PC-9 (cell line): ENCODE measurements at regions of chr4 and their contacts with region 1.

Region 1: DNA sequence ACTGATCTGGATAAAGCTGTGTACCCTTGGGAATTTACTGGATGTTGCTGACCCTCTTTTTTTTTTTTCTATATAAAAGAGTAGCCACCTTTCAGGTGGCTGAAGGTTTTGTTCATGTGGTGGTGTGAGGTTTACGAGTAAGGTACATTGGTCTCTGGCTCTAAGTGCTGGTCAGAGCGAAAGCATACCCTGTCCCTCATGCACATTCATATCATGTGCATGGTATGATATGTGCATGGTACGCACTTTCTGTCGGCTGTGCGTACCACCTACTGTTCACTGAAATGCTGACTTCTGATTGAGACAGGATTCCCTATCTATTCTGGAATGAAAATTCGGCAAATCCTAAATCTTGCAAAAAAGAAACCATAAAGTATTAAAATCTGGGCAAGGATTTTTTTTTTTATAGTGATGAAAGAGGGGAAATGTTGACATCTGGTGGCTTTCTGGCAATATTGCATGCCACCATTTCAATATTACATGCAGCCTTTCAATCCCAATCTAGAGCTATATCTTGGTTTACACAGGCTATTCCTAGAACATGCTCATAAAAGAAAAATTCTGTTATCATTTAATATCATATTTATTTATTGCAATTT is 32.8 kb downstream of the FAM149A start:
- DNase-seq: no peak
- H3K4me3 ChIP-seq: no peak overlapping the region
- H3K27ac ChIP-seq: no peak overlapping the region
- H3K4me1 ChIP-seq: no peaks in the 10 kb centered on the region
- H3K27me3 ChIP-seq: no peaks in the 10 kb centered on the region
- CTCF ChIP-seq: peak; percentile 63

Region 2: GRCh38 chr4:185640811-185641675 is 496.3 kb before region 1 on chr4:
- CTCF ChIA-PET with region 1: interaction called, 7 read pairs
- POLR2A ChIA-PET with region 1: no interaction called
- intact Hi-C with region 1: loop called (anchors 10 kb)
- DNase-seq: peak in 1 of 2 experiments; percentile 38
- H3K4me3 ChIP-seq: no peak overlapping the region
- H3K27ac ChIP-seq: no peak overlapping the region
- H3K4me1 ChIP-seq: no peaks in the 10 kb centered on the region
- H3K27me3 ChIP-seq: no peaks in the 10 kb centered on the region
- CTCF ChIP-seq: peak; percentile 67

Region 3: GRCh38 chr4:186067757-186068385 is 69.4 kb before region 1 on chr4:
- CTCF ChIA-PET with region 1: interaction called, 19 read pairs
- POLR2A ChIA-PET with region 1: interaction called, 3 read pairs
- intact Hi-C with region 1: loop called (anchors 1 kb)
- DNase-seq: peak in 1 of 2 experiments; percentile 47
- H3K4me3 ChIP-seq: peak overlapping the region; percentile 60; the same call in 1 of the 2 replicates
- H3K27ac ChIP-seq: no peak overlapping the region
- H3K4me1 ChIP-seq: peaks cover 6% of the 10 kb centered on the region; the same call in 1 of the 2 replicates
- H3K27me3 ChIP-seq: no peaks in the 10 kb centered on the region
- CTCF ChIP-seq: no peak